ENCODE measurements at regions of chr10 and their contacts with region 1.

Region 1: DNA sequence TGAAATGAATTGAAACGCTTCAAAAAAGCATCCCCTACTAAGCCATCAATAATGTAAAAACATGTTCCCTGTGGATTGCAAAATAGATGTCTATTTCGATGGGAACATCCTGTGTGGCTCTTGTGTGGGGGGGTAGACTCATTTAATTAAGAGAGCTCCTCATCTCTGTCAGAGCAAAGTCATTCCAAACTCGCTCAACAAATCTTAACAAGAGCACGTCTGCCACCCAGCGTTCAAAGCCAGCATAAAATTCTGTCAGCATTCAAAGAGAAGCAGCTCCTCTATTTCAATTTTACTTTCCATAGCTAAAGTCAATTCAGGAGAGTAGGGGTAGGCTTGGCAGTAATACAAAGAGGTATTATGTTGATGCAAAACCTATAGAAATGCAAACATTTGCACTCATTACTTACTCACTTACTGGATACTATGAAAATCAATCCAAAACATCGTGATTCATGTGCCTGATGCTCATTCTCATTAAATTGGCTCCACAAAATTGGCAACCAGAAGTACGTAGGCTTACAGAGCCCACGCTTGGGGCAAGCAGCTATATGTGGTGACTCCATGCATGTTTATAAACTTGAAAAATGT is 114.9 kb downstream of the IPMK start:
- DNase-seq: no peak
- H3K4me3 ChIP-seq: no peak overlapping the region
- H3K27me3 ChIP-seq: peaks cover 1% of the 10 kb centered on the region; the same call in 1 of the 2 replicates
- CTCF ChIP-seq: peak; percentile 74

Region 2: DNA sequence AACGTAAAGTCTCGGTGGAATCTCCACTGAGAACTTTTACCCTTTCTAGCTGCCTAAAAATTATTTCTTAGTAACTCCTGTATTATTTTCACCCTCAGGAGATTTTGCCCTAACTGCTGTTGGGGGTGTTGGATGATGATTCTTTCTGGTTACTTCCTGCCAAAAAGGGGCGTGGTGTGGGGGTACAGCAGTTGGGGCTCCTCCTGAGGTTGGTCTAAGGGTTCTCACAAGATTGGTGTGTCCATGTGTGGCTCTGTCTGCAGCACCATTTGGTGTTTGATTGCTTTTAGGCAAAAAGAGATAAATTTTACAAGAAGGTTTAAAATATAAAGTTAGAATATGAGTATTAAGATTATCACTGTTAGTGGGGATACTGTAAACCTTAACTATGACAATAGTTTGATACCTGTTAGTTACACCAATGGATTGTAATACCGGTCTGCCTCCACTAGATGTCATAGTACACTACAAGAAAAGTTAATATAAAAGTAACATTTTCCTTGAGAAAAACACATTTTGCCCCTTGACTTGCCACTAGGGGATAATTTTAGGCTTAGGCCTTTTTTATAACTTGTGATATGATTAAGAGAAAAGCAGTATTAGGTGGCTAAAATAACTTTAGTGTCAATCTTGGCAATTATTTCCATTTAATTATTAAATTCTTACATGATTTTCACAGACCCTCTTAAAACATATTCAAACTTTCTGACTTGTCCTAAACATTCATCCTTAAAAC is 813.8 kb before region 1 on chr10:
- CTCF ChIA-PET with region 1: interaction called, 18 read pairs
- POLR2A ChIA-PET with region 1: no interaction called
- DNase-seq: peak; percentile 5
- H3K4me3 ChIP-seq: no peak overlapping the region
- H3K27me3 ChIP-seq: no peaks in the 10 kb centered on the region
- CTCF ChIP-seq: peak; percentile 61

Region 3: GRCh38 chr10:57579926-57580325 is 572.8 kb before region 1 on chr10:
- CTCF ChIA-PET with region 1: interaction called, 15 read pairs
- POLR2A ChIA-PET with region 1: no interaction called
- DNase-seq: no peak
- H3K4me3 ChIP-seq: no peak overlapping the region
- H3K27me3 ChIP-seq: no peaks in the 10 kb centered on the region
- CTCF ChIP-seq: peak; percentile 33; the same call in 1 of the 2 replicates

Region 4: GRCh38 chr10:57925044-57925443 is 227.7 kb before region 1 on chr10:
- CTCF ChIA-PET with region 1: no interaction called
- POLR2A ChIA-PET with region 1: no interaction called
- DNase-seq: no peak
- H3K4me3 ChIP-seq: no peak overlapping the region
- H3K27me3 ChIP-seq: no peaks in the 10 kb centered on the region
- CTCF ChIP-seq: no peak

Measured in BJ (cell line).